Posterior vena cava (tissue), 2 donors: ENCODE measurements at regions of chr14 and their contacts with region 1.

Region 1: GRCh38 chr14:96648506-96649326 is 146.5 kb downstream of the PAPOLA start:
- DNase-seq: no peak

Region 2: GRCh38 chr14:96584199-96584906 is 64.4 kb before region 1 on chr14:
- intact Hi-C with region 1: no loop called
- DNase-seq: peak; percentile 77

Region 3: DNA sequence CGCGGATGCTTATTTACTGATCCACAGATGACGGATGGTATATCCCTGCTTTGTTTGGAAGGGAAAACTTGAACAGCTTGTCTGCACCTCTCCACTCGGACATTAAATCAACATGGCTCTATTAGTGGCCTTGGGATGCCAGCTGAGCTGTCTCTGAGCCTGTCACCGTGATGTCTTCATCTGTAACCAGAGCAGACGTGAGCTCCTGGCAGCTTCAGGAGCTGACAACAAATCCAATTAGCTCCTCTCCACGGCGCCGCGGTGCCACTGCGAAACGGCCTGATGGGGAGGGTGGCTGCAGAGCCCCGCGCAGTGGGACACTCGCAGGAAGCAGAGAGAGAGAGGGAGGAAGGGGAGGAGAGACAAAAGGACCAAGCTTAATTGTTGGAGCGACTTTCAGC is 34.2 kb before region 1 on chr14:
- intact Hi-C with region 1: no loop called
- DNase-seq: no peak

Region 4: GRCh38 chr14:96663498-96664067 is 14.9 kb after region 1 on chr14:
- intact Hi-C with region 1: loop called in 1 of 2 experiments (anchors 1 kb)
- DNase-seq: no peak